CD8-positive, alpha-beta memory T cell (primary cell): ENCODE measurements at regions of chr3 and their contacts with region 1.

Region 1: DNA sequence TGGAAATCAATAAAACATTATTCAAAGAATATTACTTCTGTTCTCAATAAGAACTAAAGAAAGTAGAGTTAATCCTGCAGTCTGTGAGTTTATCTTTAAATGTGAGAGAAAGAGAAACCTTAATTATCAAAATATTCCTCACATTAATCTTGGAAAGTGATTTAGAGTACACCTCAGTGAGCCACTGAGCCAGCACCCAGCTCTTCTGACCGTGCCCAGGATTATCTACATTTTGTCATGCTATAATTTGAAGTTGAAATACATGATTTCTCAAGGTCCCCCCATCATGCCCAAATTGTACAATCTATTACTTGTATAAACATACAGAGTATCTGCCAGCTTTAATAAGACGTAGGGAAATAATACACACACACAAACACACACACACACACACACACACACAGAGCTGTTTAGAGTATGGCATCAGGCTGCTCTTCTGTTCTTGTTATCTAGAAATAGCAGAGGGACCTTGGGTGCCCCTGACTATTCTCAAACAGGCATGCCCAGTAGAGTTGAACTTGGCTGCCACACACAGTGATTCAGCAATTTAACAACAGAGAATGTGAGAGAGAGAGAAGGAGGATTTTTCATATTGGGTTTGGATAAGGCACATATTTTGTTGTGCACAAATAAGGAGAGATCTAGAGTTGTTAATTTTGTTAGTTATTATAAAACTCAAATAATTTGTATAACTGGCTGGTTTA is 74.4 kb downstream of the P2RY1 start:
- DNase-seq: no peak
- H3K4me3 ChIP-seq: no peak overlapping the region
- H3K4me3 Mint-ChIP-seq: no peak overlapping the region
- H3K27ac ChIP-seq: no peak overlapping the region
- H3K27ac Mint-ChIP-seq: no peak overlapping the region
- H3K4me1 ChIP-seq: no peaks in the 10 kb centered on the region
- H3K4me1 Mint-ChIP-seq: no peaks in the 10 kb centered on the region
- H3K27me3 ChIP-seq: no peaks in the 10 kb centered on the region
- H3K27me3 Mint-ChIP-seq: no peaks in the 10 kb centered on the region

Region 2: GRCh38 chr3:152519376-152519775 is 390.0 kb before region 1 on chr3:
- CTCF ChIA-PET with region 1: no interaction called
- POLR2A ChIA-PET with region 1: interaction called, 13 read pairs
- DNase-seq: no peak
- H3K4me3 ChIP-seq: no peak overlapping the region
- H3K4me3 Mint-ChIP-seq: no peak overlapping the region
- H3K27ac ChIP-seq: no peak overlapping the region
- H3K27ac Mint-ChIP-seq: no peak overlapping the region
- H3K4me1 ChIP-seq: no peaks in the 10 kb centered on the region
- H3K4me1 Mint-ChIP-seq: no peaks in the 10 kb centered on the region
- H3K27me3 ChIP-seq: no peaks in the 10 kb centered on the region
- H3K27me3 Mint-ChIP-seq: peaks cover 5 to 7% of the 10 kb centered on the region in 2 donors